Tibial artery (tissue), 4 donors: ENCODE measurements at regions of chr1 and their contacts with region 1.

Region 1: GRCh38 chr1:53807916-53808315 is 30.2 kb downstream of the NDC1 start:
- DNase-seq: no peak
- H3K4me3 ChIP-seq: no peak overlapping the region
- H3K27ac ChIP-seq: no peak overlapping the region
- H3K4me1 ChIP-seq: no peaks in the 10 kb centered on the region
- H3K27me3 ChIP-seq: no peaks in the 10 kb centered on the region
- CTCF ChIP-seq: no peak

Region 2: GRCh38 chr1:53705446-53706096 is 102.3 kb before region 1 on chr1:
- intact Hi-C with region 1: no loop called
- DNase-seq: no peak
- H3K4me3 ChIP-seq: no peak overlapping the region
- H3K27ac ChIP-seq: no peak overlapping the region
- H3K4me1 ChIP-seq: no peaks in the 10 kb centered on the region
- H3K27me3 ChIP-seq: peaks cover 0 to 39% of the 10 kb centered on the region in 2 donors
- CTCF ChIP-seq: no peak

Region 3: DNA sequence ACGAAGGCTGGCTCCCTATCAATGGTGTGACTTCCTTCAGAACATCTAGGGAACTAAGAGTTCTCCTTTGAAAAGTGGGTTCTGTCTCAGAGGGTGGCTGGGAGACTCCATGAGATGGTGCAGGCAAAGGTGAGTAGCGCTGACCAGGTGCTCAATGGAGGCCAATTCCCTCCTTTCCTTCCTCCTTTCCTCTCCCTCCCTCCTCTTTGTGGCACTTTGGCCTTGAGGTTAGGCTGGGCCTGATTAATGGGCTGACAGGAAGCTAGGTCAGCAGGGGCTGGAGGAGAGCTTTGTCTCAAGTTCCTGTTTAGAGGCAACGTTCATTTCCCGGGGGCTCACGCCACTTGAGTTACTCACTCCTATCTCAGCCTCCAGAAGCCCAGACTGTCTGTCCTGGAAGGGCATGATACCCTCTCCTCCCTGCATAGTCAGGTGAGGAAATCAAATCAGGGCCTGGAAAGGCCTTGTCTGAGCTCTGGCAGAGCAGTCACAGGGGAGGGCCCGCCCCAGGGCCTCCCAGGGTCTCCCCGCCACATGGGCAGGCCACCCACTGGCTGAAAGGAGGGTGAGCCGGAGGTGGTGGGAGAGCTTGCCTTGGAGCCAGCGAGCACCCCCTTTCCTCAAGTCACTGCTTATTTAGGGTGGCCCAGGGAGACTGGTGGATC is 656.7 kb after region 1 on chr1:
- intact Hi-C with region 1: loop called (anchors 5 kb)
- DNase-seq: no peak
- H3K4me3 ChIP-seq: no peak overlapping the region
- H3K27ac ChIP-seq: no peak overlapping the region
- H3K4me1 ChIP-seq: no peaks in the 10 kb centered on the region
- H3K27me3 ChIP-seq: peaks cover 0 to 31% of the 10 kb centered on the region in 2 donors
- CTCF ChIP-seq: no peak